Activated CD4-positive, alpha-beta T cell treated with anti-CD3 and anti-CD28 coated beads for 36 hours (primary cell): ENCODE measurements at regions of chr21 and their contacts with region 1.

Region 1: GRCh38 chr21:30408782-30409494 is 13.1 kb downstream of the KRTAP13-1 start:
- DNase-seq: peak; percentile 44
- ATAC-seq: peak; percentile 61
- H3K4me3 Mint-ChIP-seq: no peak overlapping the region
- H3K27ac Mint-ChIP-seq: no peak overlapping the region
- H3K4me1 Mint-ChIP-seq: peaks cover 2% of the 10 kb centered on the region
- H3K27me3 Mint-ChIP-seq: peaks cover 11% of the 10 kb centered on the region

Region 2: DNA sequence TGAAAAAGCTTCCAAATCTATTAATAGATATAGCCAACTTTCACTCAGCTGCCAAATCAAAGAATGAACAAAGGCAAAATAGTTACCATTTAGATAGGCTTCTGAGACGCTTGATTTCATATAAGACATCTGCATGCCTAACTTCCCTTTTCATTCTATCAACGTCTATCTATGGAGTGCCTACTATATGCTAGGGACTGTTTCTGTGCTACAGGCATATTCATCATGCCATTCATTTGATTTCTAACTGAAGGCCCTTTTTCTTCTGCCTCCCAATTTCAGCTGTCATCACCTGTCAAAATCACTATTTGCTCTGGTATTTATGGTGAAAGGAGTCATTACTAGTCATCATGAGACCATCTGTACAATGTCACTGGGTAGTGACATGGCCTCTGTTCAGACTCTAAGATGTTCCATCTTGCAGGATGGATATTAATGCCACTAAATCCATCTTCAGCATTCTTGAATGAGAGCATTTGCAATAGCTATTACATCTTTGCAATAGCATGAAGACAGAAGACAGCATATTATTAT is 17.4 kb before region 1 on chr21:
- CTCF ChIA-PET with region 1: interaction called, 12 read pairs
- POLR2A ChIA-PET with region 1: no interaction called
- intact Hi-C with region 1: no loop called
- DNase-seq: no peak
- ATAC-seq: no peak
- H3K4me3 Mint-ChIP-seq: no peak overlapping the region
- H3K27ac Mint-ChIP-seq: no peak overlapping the region
- H3K4me1 Mint-ChIP-seq: no peaks in the 10 kb centered on the region
- H3K27me3 Mint-ChIP-seq: no peaks in the 10 kb centered on the region